ENCODE measurements at regions of chr11 and their contacts with region 1.

Region 1: GRCh38 chr11:63582935-63583677 is 19.9 kb upstream of the PLAAT2 start:
- DNase-seq: peak in 1 of 2 donors; percentile 14
- H3K4me3 ChIP-seq: no peak overlapping the region
- H3K27ac ChIP-seq: peak overlapping the region; percentile 88 to 91
- H3K4me1 ChIP-seq: no peaks in the 10 kb centered on the region
- H3K27me3 ChIP-seq: no peaks in the 10 kb centered on the region
- CTCF ChIP-seq: no peak
- POLR2A ChIP-seq: no peak

Region 2: GRCh38 chr11:63537293-63538101 is 45.6 kb before region 1 on chr11:
- intact Hi-C with region 1: loop called (anchors 1 kb)
- DNase-seq: peak in 1 of 2 donors; percentile 67
- H3K4me3 ChIP-seq: peak overlapping the region; percentile 39 to 68 (median 54)
- H3K27ac ChIP-seq: peak overlapping the region; percentile 95
- H3K4me1 ChIP-seq: peaks cover 23 to 50% of the 10 kb centered on the region in 2 donors
- H3K27me3 ChIP-seq: no peaks in the 10 kb centered on the region
- CTCF ChIP-seq: no peak
- POLR2A ChIP-seq: no peak